ENCODE measurements at regions of chr7 and their contacts with region 1.

Region 1: GRCh38 chr7:25851332-25852210 is 300.4 kb upstream of the NFE2L3 start:
- DNase-seq: peak; percentile 93

Region 2: GRCh38 chr7:25389489-25390106 is 462.0 kb before region 1 on chr7:
- intact Hi-C with region 1: loop called (anchors 2 to 5 kb)
- DNase-seq: no peak

Region 3: DNA sequence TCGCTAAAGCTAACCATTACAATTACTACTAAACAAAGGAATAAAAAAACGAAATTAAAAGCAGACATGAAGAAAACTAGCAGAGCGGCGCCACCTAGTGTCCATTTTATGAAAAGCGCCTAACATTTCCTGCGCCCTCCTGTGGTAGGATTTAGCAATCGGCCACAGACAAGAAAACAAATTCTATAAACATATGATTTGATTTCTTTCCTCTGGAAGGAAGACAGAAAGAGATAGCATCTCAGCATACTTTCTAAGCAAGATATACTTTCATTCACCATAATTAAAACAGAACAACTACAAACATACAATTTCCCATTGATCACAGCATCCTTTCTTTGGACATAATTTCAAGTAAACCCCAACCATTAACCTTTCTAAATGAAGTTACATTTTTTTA is 285.6 kb before region 1 on chr7:
- intact Hi-C with region 1: loop called (anchors 5 kb)
- DNase-seq: no peak

Region 4: DNA sequence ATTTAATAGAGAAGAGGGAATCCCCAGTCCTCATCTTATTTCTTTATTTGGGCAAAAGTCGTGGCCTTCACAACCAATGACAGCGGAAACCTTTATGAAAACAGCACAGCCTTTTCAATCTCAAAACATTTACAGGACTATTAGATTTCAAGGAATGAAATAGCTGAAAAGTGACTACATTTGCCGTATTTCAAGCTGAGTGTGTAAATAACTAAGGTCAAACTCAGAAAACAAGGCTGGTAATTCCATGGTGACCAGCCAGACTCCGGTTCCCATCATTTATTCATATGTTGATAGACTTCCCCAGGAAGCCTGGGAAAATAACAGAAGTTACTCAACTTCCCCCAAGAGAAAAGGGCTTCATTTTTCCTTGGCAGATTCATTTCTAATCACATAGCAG is 156.9 kb before region 1 on chr7:
- intact Hi-C with region 1: no loop called
- DNase-seq: no peak

Region 5: GRCh38 chr7:25789701-25790640 is 61.6 kb before region 1 on chr7:
- intact Hi-C with region 1: loop called in 1 of 2 experiments (anchors 10 kb)
- DNase-seq: no peak